ENCODE measurements at regions of chr9 and their contacts with region 1.

Region 1: GRCh38 chr9:134413890-134414731 is 87.9 kb downstream of the RXRA start:
- DNase-seq: peak; percentile 71 to 92 (median 85)
- ATAC-seq: peak; percentile 66 to 78 (median 70)
- H3K4me3 ChIP-seq: no peak overlapping the region
- H3K27ac ChIP-seq: peak overlapping the region in 11 of 12 donors; percentile 47 to 82 (median 68)
- H3K4me1 ChIP-seq: peaks cover 19 to 91% (median 68%) of the 10 kb centered on the region in 12 donors
- H3K27me3 ChIP-seq: no peaks in the 10 kb centered on the region
- CTCF ChIP-seq: no peak
- POLR2A ChIP-seq: no peak

Region 2: DNA sequence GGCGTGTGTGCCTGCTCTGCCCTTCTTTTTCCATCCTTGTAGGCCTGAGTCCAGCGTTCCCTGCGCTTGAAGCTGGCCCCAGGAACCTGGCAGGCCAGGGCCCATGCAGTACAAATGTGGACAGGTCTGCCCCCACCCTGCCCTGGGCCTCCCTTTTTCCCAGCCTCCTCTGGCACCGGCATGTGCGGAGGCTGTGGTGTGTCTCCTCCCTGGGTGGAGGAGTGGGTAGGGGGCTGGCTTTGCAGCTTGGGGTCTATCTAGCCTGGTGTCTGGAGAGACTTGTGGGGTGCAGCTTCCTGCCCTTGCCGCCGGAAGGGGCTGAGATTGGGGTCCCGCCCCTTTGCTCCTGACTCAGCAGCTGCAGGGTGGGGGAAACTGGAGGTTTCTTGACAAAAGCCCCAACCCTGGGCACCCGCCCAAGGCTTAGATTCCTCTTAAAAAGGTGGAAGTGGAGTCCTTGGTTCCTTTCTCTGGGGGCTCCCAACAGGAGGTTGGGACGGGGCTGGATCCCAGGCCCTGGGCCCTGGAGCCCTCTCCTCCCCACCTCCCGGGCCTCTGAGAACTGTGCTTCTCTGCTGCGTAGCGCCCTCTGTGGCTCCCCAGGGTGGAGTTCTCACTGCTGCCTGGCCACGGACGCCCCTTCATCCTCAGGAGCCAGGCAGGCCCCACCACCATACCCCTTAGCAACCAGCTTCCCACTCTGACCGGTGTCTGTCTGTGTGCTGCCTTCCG is 69.9 kb before region 1 on chr9:
- intact Hi-C with region 1: loop called in 1 of 10 experiments (anchors 10 kb)
- DNase-seq: peak; percentile 69 to 85 (median 75)
- ATAC-seq: peak in 3 of 4 donors; percentile 1 to 7 (median 2)
- H3K4me3 ChIP-seq: peak overlapping the region in 1 of 12 donors; percentile 6
- H3K27ac ChIP-seq: peak overlapping the region in 11 of 12 donors; percentile 16 to 94 (median 64)
- H3K4me1 ChIP-seq: peaks cover 36 to 100% (median 93%) of the 10 kb centered on the region in 12 donors
- H3K27me3 ChIP-seq: no peaks in the 10 kb centered on the region
- CTCF ChIP-seq: peak in 5 of 12 donors; percentile 10 to 27 (median 19)
- POLR2A ChIP-seq: no peak

Measured in heart left ventricle (tissue), 16 donors.